Sigmoid colon (tissue), 7 donors: ENCODE measurements at regions of chr17 and their contacts with region 1.

Region 1: GRCh38 chr17:76414334-76415295 is 30.2 kb downstream of the SPHK1 start:
- DNase-seq: peak; percentile 86
- H3K4me3 ChIP-seq: no peak overlapping the region
- H3K27ac ChIP-seq: peak overlapping the region in 2 of 4 donors; percentile 13 to 32
- H3K4me1 ChIP-seq: peaks cover 0 to 21% (median 17%) of the 10 kb centered on the region in 4 donors
- H3K27me3 ChIP-seq: no peaks in the 10 kb centered on the region
- CTCF ChIP-seq: no peak
- EP300 ChIP-seq: no peak
- POLR2A ChIP-seq: no peak

Region 2: DNA sequence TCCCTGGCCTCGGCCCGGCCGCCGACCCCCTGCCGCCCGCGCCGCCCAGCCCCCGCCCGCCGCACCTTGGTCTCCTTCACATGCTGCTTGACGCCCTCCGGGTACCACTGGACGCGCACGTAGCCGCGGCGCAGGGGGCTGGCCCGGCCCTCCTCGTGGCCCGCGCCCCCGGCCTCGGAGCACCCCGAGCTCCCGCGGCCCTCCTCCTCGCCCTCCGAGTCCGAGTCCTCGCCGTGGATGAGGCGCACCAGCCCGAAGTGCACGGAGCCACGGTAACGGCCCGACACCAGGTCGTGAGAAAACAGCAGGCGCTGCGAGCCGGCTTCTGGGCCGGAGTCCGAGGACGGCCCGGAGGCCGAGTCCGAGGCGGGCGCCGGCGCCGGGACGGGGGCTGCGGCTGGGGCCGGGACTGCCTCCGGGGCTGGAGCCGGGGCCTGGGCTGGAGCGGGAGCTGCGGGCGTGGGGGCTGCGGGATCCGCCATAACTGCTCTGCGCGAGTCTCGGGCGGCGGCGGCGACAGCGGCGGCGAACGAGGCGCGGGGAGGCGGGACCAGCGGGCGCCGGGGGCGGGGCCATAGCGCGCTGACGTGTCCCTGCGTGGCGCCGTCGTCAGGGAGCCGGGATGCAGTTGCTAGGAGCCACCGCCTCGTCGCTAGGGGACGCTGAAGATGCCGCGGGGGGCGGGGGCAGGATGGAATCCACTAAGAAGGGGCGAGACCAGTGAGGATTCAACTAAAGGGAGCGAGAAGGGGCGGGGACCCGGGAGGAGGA is 38.2 kb after region 1 on chr17 and contains the start of gene UBE2O:
- intact Hi-C with region 1: loop called (anchors 5 kb)
- DNase-seq: peak; percentile 89
- H3K4me3 ChIP-seq: peak within 1 kb of the TSS; percentile 55 to 97 (median 83)
- H3K27ac ChIP-seq: peak within 1 kb of the TSS; percentile 76 to 85 (median 80)
- H3K4me1 ChIP-seq: peaks cover 0 to 25% (median 20%) of the 10 kb centered on the region in 4 donors
- H3K27me3 ChIP-seq: no peaks in the 10 kb centered on the region
- CTCF ChIP-seq: peak in 2 of 4 experiments; percentile 19 to 57
- EP300 ChIP-seq: no peak
- POLR2A ChIP-seq: no peak
- total RNA-seq, gene UBE2O: 11.0 to 26.3 (median 16.1) TPM